ENCODE measurements at regions of chr3 and their contacts with region 1.

Region 1: GRCh38 chr3:141360888-141361598 is 7.3 kb upstream of the ZBTB38 start:
- DNase-seq: peak; percentile 90
- H3K4me3 ChIP-seq: no peak overlapping the region
- H3K27me3 ChIP-seq: no peaks in the 10 kb centered on the region
- CTCF ChIP-seq: peak; percentile 75

Region 2: DNA sequence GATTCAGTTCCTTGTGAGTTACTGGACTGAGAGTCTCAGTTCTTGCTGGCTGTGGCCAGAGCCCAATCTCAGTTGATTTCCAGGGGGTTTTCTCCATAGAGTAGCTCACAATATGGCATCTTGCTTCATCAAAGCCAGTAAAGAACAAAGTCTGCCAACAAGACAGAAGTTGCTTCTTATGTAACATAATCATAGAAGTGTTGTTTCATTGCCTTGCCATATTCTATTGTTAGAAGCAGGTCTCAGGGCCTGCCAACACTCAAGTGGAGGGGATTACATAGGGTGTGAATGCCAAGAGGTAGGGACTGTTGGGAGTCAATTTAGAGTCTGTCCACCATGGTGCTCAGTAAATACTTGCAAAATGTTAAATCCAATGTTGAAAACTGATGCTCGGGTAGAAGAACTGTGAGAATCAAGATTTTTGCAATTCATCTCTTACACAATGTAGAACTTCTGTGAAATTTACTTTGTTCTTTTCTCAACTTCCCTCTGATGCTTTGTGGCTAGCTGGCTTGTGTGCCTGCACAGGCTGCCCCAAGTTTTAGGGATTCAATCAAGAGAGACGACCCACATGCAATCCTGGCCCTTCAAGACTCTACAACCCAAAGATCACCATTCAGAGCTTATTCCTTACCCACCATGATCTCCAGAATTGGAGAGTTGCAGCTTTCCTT is 142.7 kb before region 1 on chr3:
- CTCF ChIA-PET with region 1: no interaction called
- POLR2A ChIA-PET with region 1: no interaction called
- DNase-seq: no peak
- H3K4me3 ChIP-seq: no peak overlapping the region
- H3K27me3 ChIP-seq: peaks cover 8% of the 10 kb centered on the region
- CTCF ChIP-seq: no peak

Region 3: DNA sequence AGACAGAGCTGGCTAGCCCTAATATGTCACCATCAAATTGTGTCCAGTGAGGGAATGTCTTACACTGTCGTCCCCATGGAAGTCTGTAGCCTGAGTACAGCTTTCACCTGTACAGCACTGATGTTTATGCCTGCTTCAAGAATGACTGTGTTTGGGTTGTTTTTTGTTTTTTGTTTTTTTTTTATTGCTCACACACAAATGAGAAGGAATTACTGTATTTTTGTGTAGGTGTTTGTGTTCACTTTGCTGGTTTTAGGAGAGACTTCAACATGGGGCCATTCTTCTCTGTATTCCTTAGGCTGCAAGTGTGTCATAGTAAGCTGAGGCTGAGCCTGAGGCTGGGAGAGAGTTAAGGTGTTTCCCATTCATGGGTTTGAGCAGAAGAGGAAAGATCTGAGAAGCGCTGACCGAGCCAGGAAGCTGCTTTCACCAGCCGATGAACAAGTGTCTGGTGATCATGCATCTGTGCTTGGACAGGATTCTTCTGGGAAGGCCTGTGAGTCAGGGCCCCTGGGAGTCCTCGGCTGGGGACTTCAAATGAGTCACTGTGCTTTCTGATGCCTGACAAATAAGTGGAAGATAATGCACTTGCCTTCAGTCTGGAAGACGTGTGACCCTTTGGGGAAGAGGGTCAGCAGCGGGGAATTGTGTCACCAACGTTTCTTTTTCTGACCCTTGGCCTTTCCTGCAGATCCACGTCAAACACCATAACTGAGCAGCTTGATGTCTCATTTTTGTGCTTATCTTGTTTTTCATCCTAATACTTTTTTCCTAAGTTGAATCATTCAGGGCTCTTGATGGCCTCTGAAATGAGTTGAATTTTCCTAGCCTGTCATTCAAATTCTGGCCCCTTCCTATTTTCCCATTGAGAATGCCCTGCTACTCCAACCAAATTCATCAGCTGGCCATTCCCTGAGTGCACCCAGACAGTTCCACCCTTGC is 29.4 kb before region 1 on chr3:
- CTCF ChIA-PET with region 1: interaction called, 13 read pairs
- POLR2A ChIA-PET with region 1: no interaction called
- DNase-seq: peak; percentile 94
- H3K4me3 ChIP-seq: no peak overlapping the region
- H3K27me3 ChIP-seq: no peaks in the 10 kb centered on the region
- CTCF ChIP-seq: no peak

Region 4: GRCh38 chr3:141383555-141384129 is 22.6 kb after region 1 on chr3:
- CTCF ChIA-PET with region 1: interaction called, 17 read pairs
- POLR2A ChIA-PET with region 1: interaction called, 3 read pairs
- DNase-seq: no peak
- H3K4me3 ChIP-seq: peak overlapping the region; percentile 9
- H3K27me3 ChIP-seq: no peaks in the 10 kb centered on the region
- CTCF ChIP-seq: no peak

Region 5: DNA sequence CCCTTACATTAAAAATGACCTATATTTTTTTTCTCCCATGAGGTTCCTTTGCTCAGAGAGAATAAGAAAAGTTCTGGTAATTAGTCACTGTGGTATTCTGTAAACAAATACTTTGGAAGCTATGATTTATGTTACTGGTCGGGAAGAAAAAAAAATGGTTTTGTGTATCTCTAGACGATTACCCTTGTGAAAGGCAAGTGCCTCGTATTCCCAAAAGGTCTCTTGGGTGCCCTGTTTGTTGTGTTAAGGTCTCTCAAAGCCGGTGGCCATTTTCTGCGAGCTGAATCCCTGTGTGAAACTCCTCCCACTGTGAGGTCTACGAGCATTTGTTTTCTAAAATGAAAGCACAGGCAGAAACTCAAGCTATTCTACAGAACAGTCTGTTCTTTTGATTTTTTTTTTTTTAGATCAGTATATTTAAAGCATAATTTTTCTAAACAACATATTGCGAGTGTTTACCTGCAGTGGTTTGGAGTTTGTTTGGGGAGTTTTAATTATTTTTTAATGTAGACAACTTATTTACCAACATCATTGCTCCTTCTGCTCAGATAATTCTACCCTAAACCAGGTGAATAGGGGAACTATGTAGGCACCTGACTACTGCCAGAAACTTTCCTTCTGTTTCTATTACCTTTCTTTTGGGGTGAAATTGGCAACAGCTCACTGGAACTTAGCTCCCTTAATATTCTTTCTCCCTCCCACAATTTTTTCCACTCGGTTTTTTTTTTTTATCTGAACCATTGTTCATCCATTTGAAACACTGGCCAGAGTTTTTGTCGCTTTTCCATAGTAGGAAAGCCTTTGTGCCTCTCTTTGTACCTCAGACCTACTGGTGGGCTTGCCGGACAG is 51.3 kb after region 1 on chr3:
- CTCF ChIA-PET with region 1: interaction called, 15 read pairs
- POLR2A ChIA-PET with region 1: interaction called, 11 read pairs
- DNase-seq: peak; percentile 61
- H3K4me3 ChIP-seq: no peak overlapping the region
- H3K27me3 ChIP-seq: no peaks in the 10 kb centered on the region
- CTCF ChIP-seq: no peak

Region 6: DNA sequence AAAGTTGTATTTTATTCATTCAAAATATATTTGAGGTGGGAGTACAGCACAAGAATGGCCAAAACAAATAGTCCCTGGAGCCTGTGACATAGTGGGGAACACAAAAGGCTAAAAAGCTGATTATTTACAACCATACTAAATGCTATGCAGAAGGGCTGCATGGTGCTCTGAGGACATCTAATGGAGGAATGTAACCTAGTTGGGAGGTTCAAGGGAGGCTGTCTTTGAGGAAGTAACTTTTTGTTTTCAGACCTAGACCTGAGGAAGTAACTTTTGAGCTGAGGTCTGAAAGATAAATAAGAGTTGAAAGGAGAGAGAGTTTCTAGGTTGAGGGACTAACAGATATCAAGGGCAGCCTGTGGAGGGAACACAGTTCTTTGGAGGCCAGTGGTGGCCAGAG is 91.0 kb after region 1 on chr3:
- CTCF ChIA-PET with region 1: interaction called, 70 read pairs
- POLR2A ChIA-PET with region 1: interaction called, 5 read pairs
- DNase-seq: no peak
- H3K4me3 ChIP-seq: no peak overlapping the region
- H3K27me3 ChIP-seq: no peaks in the 10 kb centered on the region
- CTCF ChIP-seq: peak; percentile 71

Region 7: DNA sequence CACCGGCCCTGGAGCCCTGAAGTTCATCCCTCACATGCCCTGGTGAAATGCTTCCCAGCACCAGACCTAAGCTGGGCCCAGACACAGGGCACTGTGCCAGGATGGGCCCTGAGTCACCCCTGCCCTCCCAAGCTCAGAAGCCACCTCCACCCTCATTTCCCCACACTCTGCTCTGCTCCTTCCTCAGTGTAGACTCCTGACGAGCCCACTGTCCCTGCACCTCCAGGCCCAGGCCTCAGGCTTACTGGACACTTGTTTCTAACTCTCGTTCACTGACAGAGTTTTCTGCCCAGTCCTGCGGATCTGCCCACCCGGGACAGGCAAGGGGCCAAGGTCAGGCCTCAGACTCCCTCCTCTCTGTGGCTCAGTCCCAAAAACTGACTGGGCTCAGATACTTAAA is 264.5 kb after region 1 on chr3:
- CTCF ChIA-PET with region 1: no interaction called
- POLR2A ChIA-PET with region 1: no interaction called
- DNase-seq: no peak
- H3K4me3 ChIP-seq: no peak overlapping the region
- H3K27me3 ChIP-seq: no peaks in the 10 kb centered on the region
- CTCF ChIP-seq: no peak